ENCODE measurements at regions of chr19 and their contacts with region 1.

Region 1: DNA sequence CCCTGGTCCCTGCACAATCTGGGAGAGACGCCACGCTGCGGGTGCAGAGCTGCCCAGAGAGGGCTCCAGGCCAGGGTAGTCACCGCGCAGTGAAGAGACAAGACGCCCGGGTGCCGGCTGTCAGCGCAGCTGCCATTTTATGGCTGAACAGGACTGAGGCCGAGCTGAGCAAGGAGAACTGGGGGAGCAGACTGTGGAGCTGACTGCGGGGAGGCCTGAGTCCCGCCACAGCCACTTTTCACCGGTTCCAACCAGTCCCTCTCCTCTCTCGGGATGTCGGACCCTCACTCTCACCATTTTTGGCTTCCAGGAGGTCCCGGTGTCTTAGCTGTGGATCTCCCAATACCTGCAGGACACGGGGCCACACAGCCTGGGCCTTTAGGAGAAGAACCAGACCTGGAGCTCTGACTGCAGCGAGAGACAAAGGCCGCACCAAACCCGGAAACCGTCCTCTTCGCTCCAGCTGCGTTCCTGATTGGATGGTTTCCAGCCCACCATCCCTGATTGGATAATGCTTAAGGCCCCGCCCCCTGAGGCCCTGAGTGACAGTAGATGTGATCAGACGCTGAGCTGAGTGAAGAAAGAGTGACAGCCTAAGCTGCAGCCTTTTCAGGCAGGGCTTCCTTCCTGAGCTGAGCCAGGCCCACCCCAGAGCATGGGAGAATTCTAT is at the start of gene ZNF626:
- DNase-seq: peak; percentile 98 to 99
- H3K4me3 ChIP-seq: peak within 1 kb of the TSS; percentile 84 to 91
- H3K27ac ChIP-seq: peak within 1 kb of the TSS; percentile 91 to 93
- H3K4me1 ChIP-seq: peaks cover 0 to 36% (median 11%) of the 10 kb centered on the region in 4 donors
- H3K27me3 ChIP-seq: no peaks in the 10 kb centered on the region
- CTCF ChIP-seq: no peak

Region 2: DNA sequence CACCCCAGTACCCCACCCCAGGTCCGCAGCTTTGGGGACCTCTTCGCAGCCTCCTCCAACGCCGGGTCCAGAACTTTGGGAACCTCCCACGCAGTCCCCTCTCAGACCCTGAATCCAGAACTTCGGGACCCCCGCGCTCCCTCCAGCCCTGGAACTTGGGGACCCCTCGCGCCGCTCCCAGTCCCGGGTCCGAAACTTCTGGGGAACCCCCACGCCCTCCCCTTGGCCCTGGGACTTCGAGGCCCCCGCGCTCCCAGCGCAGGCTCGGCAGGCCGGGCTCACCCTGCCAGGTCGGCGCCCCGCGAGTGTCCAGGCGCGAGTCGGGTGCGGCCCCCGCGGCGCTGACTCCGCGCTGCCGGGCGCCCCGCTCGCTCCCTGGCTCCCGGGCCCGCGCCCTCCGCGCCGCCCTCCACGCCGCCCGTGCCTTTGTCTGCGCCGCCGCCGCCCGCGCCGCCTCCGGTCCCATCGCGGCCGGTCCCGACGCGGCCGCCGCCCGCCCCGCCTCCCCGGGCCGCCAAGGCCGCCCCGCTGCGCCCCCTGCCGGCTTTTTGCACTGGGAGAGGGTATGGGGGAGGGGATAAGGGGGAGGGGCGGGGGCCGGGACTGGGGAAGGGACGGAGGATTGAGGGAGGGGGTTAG is 1720.4 kb before region 1 on chr19 and contains the start of gene HOMER3:
- intact Hi-C with region 1: loop called (anchors 10 kb)
- DNase-seq: peak; percentile 74 to 87
- H3K4me3 ChIP-seq: peak within 1 kb of the TSS; percentile 73 to 95
- H3K27ac ChIP-seq: peak within 1 kb of the TSS; percentile 73 to 78
- H3K4me1 ChIP-seq: peaks cover 0 to 20% (median 13%) of the 10 kb centered on the region in 4 donors
- H3K27me3 ChIP-seq: no peaks in the 10 kb centered on the region
- CTCF ChIP-seq: peak; percentile 35 to 42

Region 3: DNA sequence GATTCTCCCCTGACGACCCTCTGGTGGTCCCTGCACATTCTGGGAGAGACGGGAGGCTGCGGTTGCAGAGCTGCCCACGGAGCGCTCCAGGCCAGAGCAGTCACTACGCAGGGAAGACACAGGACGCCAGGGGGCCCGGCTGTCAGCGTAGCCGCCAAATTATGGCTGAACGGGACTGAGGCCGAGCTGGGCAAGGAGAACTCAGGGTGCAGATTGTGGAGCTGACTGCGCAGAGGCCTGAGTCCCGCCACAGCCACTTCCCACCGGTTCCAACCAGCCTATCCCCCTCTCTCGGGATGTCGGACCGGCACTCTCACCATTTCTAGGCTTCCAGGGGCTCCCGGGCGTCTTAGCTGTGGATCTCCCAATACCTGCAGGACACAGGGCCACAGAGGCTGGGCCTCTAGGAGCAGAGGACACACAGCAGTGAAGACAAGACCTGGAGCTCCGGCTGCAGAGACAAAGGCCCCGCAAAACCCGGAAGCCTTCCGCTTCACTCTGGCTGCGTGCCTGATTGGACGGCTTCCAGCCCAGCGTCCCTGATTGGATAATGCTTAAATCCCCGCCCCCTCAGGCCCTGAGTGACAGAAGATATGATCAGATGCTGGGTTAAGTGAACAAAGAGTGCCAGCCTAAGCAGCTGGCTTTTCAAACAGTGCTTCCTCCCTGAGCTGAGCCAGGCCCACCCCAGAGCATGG is 95.8 kb before region 1 on chr19 and contains the start of gene ZNF737:
- intact Hi-C with region 1: loop called (anchors 10 kb)
- DNase-seq: peak; percentile 96 to 98
- H3K4me3 ChIP-seq: peak within 1 kb of the TSS; percentile 70 to 80
- H3K27ac ChIP-seq: peak within 1 kb of the TSS; percentile 88 to 91
- H3K4me1 ChIP-seq: peaks cover 0 to 14% (median 5%) of the 10 kb centered on the region in 4 donors
- H3K27me3 ChIP-seq: no peaks in the 10 kb centered on the region
- CTCF ChIP-seq: peak; percentile 36 to 37

Region 4: GRCh38 chr19:20776083-20777076 is 115.1 kb after region 1 on chr19 and contains the start of gene ZNF66:
- intact Hi-C with region 1: loop called (anchors 10 kb)
- DNase-seq: peak; percentile 98 to 99
- H3K4me3 ChIP-seq: peak within 1 kb of the TSS; percentile 73 to 87
- H3K27ac ChIP-seq: peak within 1 kb of the TSS; percentile 58 to 62
- H3K4me1 ChIP-seq: peaks cover 0 to 5% (median 0%) of the 10 kb centered on the region in 4 donors
- H3K27me3 ChIP-seq: no peaks in the 10 kb centered on the region
- CTCF ChIP-seq: no peak

Measured in tibial artery (tissue), 4 donors.